ENCODE measurements at regions of chr9 and their contacts with region 1.

Region 1: DNA sequence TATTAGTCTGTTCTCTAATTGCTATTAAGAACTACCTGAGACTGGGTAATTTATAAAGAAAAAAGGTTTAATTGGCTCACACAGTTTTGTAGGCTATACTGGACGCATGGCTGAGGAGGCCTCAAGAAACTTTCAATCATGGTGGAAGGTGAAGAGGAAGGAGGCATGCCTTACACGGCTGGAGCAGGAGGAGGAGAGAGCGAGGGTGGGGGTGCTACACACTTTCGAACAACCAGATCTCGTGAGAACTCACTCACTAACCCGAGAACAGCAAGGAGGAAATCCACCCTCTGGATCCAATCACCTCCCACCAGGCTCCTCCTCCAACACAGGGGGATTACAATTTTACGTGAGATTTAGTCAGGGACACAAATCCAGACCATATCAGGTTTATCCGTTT is 90.0 kb downstream of the RMI1 start:
- DNase-seq: no peak
- ATAC-seq: no peak
- H3K4me3 ChIP-seq: no peak overlapping the region
- H3K4me3 Mint-ChIP-seq: no peak overlapping the region
- H3K27ac ChIP-seq: no peak overlapping the region
- H3K27ac Mint-ChIP-seq: no peak overlapping the region
- H3K4me1 ChIP-seq: no peaks in the 10 kb centered on the region
- H3K4me1 Mint-ChIP-seq: no peaks in the 10 kb centered on the region
- H3K27me3 ChIP-seq: peaks cover 2% of the 10 kb centered on the region
- H3K27me3 Mint-ChIP-seq: peaks cover 4 to 9% of the 10 kb centered on the region in 2 donors
- CTCF ChIP-seq: no peak

Region 2: GRCh38 chr9:84121991-84122523 is 51.5 kb after region 1 on chr9:
- intact Hi-C with region 1: loop called (anchors 10 kb)
- DNase-seq: no peak
- ATAC-seq: no peak
- H3K4me3 ChIP-seq: no peak overlapping the region
- H3K4me3 Mint-ChIP-seq: no peak overlapping the region
- H3K27ac ChIP-seq: no peak overlapping the region
- H3K27ac Mint-ChIP-seq: no peak overlapping the region
- H3K4me1 ChIP-seq: no peaks in the 10 kb centered on the region
- H3K4me1 Mint-ChIP-seq: no peaks in the 10 kb centered on the region
- H3K27me3 ChIP-seq: peaks cover 4% of the 10 kb centered on the region
- H3K27me3 Mint-ChIP-seq: peaks cover 22 to 32% of the 10 kb centered on the region in 2 donors
- CTCF ChIP-seq: no peak

Measured in natural killer cell (primary cell).